Activated CD4-positive, alpha-beta T cell treated with anti-CD3 and anti-CD28 coated beads, Interleukin-2, amount 10 ng/mL, durations not matched to agents 24 days and 14 days (primary cell): ENCODE measurements at regions of chr20 and their contacts with region 1.

Region 1: GRCh38 chr20:38962044-38962927 is at the start of gene DHX35:
- DNase-seq: peak; percentile 100
- H3K4me3 Mint-ChIP-seq: peak within 1 kb of the TSS; percentile 98
- H3K27ac Mint-ChIP-seq: peak within 1 kb of the TSS; percentile 99
- H3K4me1 Mint-ChIP-seq: peaks cover 23% of the 10 kb centered on the region
- H3K27me3 Mint-ChIP-seq: no peaks in the 10 kb centered on the region
- total RNA-seq, gene DHX35: 15.9 and 18.3 TPM in 2 replicates

Region 2: DNA sequence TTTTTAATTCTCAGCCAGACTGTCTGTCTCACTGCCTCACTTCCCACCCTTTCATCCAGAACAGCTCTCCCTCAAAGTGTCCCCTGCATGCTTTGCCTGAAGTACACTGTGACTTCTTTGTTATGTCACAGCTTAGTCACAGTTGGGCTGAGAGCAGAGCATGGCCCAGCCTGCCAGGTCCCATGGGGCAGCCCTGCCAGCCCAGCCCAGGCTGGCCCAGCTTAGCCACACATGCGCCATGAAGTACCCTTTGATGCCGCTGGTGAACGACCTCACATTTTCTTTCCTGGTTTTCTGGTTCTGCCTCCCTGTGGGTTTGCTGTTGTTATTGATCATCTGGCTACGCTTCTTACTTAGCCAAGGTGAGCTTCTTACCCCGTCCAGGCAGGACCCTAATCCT is 381.3 kb before region 1 on chr20 and contains the start of gene ADIG:
- intact Hi-C with region 1: no loop called
- DNase-seq: no peak
- H3K4me3 Mint-ChIP-seq: no peak within 1 kb of the TSS
- H3K27ac Mint-ChIP-seq: no peak within 1 kb of the TSS
- H3K4me1 Mint-ChIP-seq: no peaks in the 10 kb centered on the region
- H3K27me3 Mint-ChIP-seq: peaks cover 2% of the 10 kb centered on the region
- total RNA-seq, gene ADIG: not detected in 2 replicates

Region 3: GRCh38 chr20:38692436-38693411 is 269.6 kb before region 1 on chr20:
- intact Hi-C with region 1: no loop called
- DNase-seq: peak; percentile 88
- H3K4me3 Mint-ChIP-seq: no peak overlapping the region
- H3K27ac Mint-ChIP-seq: no peak overlapping the region
- H3K4me1 Mint-ChIP-seq: no peaks in the 10 kb centered on the region
- H3K27me3 Mint-ChIP-seq: peaks cover 4% of the 10 kb centered on the region

Region 4: GRCh38 chr20:38748097-38748860 is 214.0 kb before region 1 on chr20 and contains the start of gene ACTR5:
- intact Hi-C with region 1: loop called (anchors 1 kb)
- DNase-seq: peak; percentile 99
- H3K4me3 Mint-ChIP-seq: peak within 1 kb of the TSS; percentile 91
- H3K27ac Mint-ChIP-seq: peak within 1 kb of the TSS; percentile 93
- H3K4me1 Mint-ChIP-seq: peaks cover 21% of the 10 kb centered on the region
- H3K27me3 Mint-ChIP-seq: peaks cover 9% of the 10 kb centered on the region
- total RNA-seq, gene ACTR5: 15.2 and 15.8 TPM in 2 replicates

Region 5: DNA sequence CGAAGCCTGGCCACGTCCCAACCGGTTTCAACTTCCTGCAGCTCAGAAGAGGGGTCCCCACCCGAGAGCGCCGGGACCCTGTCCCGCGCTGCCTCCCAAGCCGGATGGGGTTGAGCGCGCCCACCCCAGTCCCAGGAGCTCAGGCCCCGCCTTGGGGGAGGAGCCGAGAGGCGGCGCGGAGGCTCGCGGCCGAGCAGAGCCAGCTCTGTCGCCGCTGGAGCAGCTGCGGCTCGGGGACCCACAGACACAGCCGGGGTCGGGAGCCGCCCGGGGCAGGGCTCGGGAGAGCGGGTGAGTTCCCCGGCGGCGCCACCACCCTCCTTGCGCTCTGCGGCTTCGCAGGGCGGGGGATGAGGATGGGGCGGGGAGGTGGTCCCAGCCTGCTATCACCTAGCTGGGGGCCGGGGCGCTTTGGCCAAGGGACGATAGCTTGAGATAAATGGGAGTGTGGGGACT is 156.8 kb before region 1 on chr20 and contains the start of gene PPP1R16B:
- intact Hi-C with region 1: loop called (anchors 1 kb)
- DNase-seq: peak; percentile 95
- H3K4me3 Mint-ChIP-seq: peak within 1 kb of the TSS; percentile 92
- H3K27ac Mint-ChIP-seq: peak within 1 kb of the TSS; percentile 96
- H3K4me1 Mint-ChIP-seq: peaks cover 48% of the 10 kb centered on the region
- H3K27me3 Mint-ChIP-seq: no peaks in the 10 kb centered on the region
- total RNA-seq, gene PPP1R16B: 133 TPM in 2 replicates

Region 6: DNA sequence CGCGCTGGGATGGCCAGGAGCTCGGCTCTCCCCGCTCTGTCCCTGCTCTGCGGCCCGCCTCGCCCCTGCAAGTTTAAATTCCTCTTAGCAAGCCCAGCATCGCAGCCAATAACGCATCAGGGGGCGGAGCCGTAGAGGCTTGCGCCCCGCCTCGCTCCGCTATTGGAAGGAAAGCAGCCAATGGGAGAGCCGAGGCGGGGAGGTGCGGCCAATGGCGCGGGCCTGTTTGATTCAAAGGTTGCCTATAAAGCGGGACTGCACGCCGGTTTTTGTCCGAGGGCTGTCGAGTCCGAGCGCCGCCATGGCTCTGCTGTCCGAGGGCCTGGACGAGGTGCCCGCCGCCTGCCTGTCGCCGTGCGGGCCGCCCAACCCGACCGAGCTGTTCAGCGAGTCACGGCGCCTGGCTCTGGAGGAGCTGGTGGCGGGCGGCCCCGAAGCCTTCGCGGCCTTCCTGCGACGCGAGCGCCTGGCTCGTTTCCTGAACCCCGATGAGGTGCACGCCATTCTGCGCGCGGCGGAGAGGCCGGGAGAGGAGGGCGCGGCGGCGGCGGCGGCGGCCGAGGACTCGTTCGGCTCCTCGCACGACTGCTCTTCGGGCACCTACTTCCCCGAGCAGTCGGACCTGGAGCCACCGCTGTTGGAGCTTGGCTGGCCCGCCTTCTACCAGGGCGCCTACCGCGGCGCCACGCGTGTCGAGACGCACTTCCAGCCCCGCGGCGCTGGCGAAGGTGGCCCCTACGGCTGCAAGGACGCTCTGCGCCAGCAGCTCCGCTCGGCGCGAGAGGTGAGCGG is 35.9 kb before region 1 on chr20 and contains the start of gene FAM83D:
- intact Hi-C with region 1: loop called (anchors 1 kb)
- DNase-seq: peak; percentile 99
- H3K4me3 Mint-ChIP-seq: peak within 1 kb of the TSS; percentile 79
- H3K27ac Mint-ChIP-seq: peak within 1 kb of the TSS; percentile 77
- H3K4me1 Mint-ChIP-seq: peaks cover 32% of the 10 kb centered on the region
- H3K27me3 Mint-ChIP-seq: no peaks in the 10 kb centered on the region
- total RNA-seq, gene FAM83D: 12.9 and 13.7 TPM in 2 replicates

Region 7: GRCh38 chr20:38997622-38998021 is 35.3 kb after region 1 on chr20:
- intact Hi-C with region 1: loop called (anchors 1 kb)
- DNase-seq: peak; percentile 77
- H3K4me3 Mint-ChIP-seq: peak overlapping the region; percentile 17
- H3K27ac Mint-ChIP-seq: peak overlapping the region; percentile 77
- H3K4me1 Mint-ChIP-seq: peaks cover 30% of the 10 kb centered on the region
- H3K27me3 Mint-ChIP-seq: no peaks in the 10 kb centered on the region

Region 8: DNA sequence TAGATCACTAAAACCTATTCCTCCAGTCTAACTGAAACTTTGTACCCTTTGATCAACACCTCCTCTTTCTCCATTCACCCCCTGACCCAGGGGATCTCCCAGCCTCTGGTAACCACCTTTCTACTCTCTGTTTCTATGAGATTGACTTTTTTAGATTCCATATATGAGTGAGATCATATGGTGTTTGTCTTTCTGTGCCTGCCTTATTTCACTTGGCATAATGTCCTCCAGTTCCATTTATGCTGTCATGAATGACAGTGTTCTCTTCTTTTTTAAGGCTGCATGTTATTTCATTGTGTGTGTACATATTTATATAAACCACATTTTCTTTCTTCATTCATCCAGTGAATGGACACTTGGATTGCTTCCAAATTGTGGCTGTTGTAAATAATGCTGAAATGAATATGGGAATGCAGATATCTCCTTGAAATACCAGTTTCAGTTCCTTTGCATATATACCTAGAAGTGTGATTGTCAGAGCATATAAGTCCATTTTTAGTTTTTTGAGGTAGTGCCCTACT is 57.6 kb after region 1 on chr20:
- intact Hi-C with region 1: loop called (anchors 1 kb)
- DNase-seq: peak; percentile 68
- H3K4me3 Mint-ChIP-seq: peak overlapping the region; percentile 1
- H3K27ac Mint-ChIP-seq: peak overlapping the region; percentile 38
- H3K4me1 Mint-ChIP-seq: peaks cover 43% of the 10 kb centered on the region
- H3K27me3 Mint-ChIP-seq: no peaks in the 10 kb centered on the region

Region 9: GRCh38 chr20:39049684-39050554 is 87.6 kb after region 1 on chr20:
- intact Hi-C with region 1: loop called (anchors 1 kb)
- DNase-seq: peak; percentile 96
- H3K4me3 Mint-ChIP-seq: peak overlapping the region; percentile 88
- H3K27ac Mint-ChIP-seq: peak overlapping the region; percentile 75
- H3K4me1 Mint-ChIP-seq: peaks cover 4% of the 10 kb centered on the region
- H3K27me3 Mint-ChIP-seq: peaks cover 11% of the 10 kb centered on the region